Calu3 (cell line): ENCODE measurements at regions of chr5 and their contacts with region 1.

Region 1: DNA sequence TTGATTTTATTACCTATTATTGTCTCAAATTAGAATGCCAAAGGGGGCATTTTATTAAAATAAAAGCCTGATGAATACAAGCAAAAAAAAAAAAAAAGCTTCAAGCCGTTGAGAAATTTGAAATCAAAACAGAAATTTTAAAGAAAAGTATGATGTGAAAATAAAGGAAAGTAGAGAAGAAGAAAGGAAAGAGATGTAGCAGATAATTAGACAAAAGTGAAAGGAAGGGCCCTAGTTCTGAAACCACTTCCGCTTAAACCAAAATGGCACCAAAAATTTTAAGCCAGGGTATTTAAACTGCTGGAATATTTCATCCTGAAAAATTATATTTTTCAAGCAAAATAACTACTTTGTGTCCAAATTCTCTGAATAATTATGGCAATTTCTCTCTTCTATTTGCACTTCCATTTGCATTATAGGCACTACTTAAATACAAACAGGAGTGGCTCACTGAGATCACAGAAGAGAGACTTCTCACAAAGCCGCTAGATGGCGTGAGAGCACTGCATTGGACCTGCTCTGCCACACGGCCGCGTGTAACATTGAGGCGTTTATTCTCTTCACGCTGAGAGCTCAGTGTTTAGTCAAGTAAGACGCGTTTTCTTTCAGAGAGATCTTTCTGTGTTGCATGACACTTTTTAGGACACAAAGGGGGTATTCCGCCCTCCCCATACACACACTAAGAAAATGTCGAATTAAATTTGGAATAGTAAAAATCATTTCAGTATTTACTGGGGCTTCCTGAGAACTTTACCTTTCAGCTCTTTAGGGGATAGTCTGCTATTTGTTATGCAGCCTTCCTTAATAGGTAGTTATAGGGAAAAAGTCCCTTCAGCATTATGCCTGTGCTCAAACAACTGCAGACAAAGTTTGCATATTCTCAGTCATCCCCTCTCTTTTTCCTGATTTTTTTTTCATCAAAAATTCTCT is 368.4 kb upstream of the CCNH start:
- DNase-seq: peak; percentile 83
- H3K4me3 Mint-ChIP-seq: no peak overlapping the region
- H3K27ac Mint-ChIP-seq: no peak overlapping the region
- H3K4me1 Mint-ChIP-seq: peaks cover 26% of the 10 kb centered on the region
- H3K27me3 Mint-ChIP-seq: no peaks in the 10 kb centered on the region
- CTCF ChIP-seq: peak; percentile 90

Region 2: DNA sequence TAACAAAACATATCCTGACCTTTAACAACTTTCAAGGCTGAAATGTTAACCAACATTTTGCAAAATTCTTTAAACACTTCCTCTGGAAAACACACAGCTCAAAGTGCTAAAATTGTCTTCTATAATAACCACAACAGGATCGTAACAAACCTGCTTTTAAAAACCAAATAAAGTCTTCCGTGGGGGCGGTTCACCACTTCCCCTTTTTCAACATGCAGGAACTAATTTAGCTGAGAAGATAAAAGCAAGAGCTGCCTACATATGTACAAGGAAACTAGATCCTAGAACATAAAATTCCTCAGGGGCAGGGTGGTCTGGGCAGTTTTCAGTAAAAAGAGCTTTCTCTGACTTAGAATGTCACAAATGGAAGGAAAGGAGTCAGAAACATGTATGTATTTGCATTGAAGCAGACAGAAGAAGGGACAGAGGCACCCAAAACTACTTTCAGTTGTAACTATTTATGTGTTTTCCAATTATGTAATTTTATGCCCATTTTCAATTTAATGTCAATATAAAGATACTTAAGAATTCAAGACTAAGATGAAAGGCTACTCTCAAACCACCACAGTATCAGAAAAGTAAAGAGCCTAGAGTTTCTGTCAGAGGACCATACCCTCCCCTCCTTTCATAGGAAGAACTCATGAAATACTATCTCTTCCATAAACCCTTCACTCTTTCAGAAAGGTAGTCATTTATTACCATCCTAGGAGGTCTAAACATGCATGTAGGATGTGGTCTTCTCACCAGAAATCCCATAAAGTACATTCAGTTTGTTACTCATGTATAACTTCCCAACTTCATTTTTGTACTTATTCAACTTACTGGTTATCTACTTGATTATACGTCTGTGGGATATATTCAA is 699.4 kb before region 1 on chr5:
- CTCF ChIA-PET with region 1: no interaction called
- intact Hi-C with region 1: no loop called
- DNase-seq: no peak
- H3K4me3 Mint-ChIP-seq: no peak overlapping the region
- H3K27ac Mint-ChIP-seq: peak overlapping the region; percentile 53
- H3K4me1 Mint-ChIP-seq: peaks cover 32% of the 10 kb centered on the region
- H3K27me3 Mint-ChIP-seq: no peaks in the 10 kb centered on the region
- CTCF ChIP-seq: no peak

Region 3: DNA sequence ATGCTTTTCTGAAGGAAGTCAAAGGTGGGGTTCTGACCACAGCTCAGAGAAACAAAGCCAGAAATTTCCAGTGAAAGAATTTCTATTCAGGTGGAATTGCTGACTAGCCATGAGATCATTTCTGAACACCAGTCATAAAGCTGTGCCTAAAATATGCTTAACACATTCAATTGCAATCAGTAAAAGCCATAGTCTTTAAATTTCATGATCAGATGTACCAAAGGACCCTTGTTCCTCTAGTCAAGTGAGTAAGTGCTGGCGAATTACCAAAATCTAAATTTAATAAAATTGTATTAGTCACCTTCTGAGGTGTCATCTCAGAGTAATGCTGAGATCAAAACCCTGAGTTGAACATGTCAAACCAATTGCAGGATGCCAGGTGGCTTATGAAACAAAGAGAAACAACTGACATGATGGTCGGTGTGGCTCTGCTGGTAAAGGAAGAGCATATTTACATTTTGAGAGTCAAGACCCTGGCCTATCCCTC is 34.2 kb before region 1 on chr5:
- CTCF ChIA-PET with region 1: no interaction called
- intact Hi-C with region 1: no loop called
- DNase-seq: no peak
- H3K4me3 Mint-ChIP-seq: no peak overlapping the region
- H3K27ac Mint-ChIP-seq: no peak overlapping the region
- H3K4me1 Mint-ChIP-seq: peaks cover 4% of the 10 kb centered on the region
- H3K27me3 Mint-ChIP-seq: no peaks in the 10 kb centered on the region
- CTCF ChIP-seq: no peak

Region 4: DNA sequence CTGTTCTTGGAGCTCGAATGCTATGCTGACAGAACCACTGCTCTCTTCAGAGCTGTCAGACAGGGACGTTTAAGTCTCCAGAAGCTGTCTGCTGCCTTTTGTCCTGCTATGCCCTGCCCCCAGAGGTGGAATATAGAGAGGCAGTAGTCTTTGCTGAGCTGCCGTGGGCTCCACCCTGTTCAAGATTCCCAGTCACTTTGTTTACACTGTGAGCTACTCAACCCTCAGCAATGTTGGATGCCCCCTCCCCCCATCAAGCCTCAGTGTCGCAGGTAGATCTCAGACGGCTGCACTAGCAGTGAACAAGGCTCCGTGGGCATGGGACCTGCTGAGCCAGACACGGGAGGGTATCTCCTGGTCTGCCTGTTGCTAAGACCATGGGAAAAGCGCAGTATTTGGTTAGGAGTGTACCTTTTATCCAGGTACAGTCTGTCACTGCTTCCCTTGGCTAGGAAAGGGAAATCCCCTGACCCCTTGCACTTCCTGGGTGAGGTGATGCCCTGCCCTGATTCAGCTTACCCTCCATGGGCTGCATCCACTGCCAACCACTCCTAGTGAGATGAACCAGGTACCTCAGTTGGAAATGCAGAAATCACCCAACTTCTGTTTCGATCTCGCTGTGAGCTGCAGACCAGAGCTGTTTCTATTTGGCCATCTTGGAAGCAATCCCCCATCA is 143.5 kb after region 1 on chr5:
- CTCF ChIA-PET with region 1: interaction called, 7 read pairs
- intact Hi-C with region 1: loop called (anchors 5 kb)
- DNase-seq: peak; percentile 80
- H3K4me3 Mint-ChIP-seq: peak overlapping the region; percentile 9
- H3K27ac Mint-ChIP-seq: no peak overlapping the region
- H3K4me1 Mint-ChIP-seq: peaks cover 8% of the 10 kb centered on the region
- H3K27me3 Mint-ChIP-seq: no peaks in the 10 kb centered on the region
- CTCF ChIP-seq: peak; percentile 29

Region 5: DNA sequence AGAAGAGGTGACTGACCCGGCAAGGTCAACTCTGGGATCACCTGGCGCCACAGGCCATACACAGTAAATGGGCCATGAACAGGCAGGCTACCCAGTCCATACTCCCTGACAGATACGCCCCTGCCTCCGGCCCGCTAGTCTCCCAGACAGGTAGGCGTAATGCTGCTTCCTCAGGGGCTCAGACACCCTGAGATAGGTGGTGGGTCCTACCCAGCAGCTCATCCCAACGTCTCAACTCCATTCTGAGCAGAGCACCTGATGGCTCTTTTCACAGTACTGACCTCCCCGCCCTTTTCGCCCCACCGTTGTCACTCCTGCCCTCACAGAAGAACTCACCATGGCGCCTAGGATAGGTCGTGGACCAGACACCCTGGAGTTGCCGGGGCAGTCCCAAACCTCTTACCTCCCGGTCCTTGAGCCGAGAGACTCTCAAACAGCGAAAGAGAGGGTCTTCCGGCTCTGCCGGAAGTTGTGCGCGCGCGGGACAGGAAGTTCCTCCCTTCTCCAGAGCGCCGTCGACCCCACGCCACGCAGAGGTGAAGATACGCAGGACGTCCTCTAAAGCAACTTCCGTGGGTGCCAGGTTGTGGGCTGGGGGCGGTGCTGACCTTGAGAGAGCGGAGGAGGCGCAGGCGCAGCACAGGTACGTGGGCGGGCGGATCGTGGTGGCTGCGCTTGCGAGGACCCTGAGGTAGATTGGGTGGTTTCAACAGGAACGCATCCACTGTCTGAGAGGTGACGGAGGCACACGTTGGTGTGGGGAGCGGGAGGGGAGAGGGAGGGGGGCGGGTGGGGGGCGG is 487.5 kb after region 1 on chr5 and contains the start of gene TMEM161B:
- CTCF ChIA-PET with region 1: no interaction called
- intact Hi-C with region 1: loop called (anchors 10 kb)
- DNase-seq: peak; percentile 95
- H3K4me3 Mint-ChIP-seq: peak within 1 kb of the TSS; percentile 98
- H3K27ac Mint-ChIP-seq: peak within 1 kb of the TSS; percentile 94
- H3K4me1 Mint-ChIP-seq: peaks cover 32% of the 10 kb centered on the region
- H3K27me3 Mint-ChIP-seq: no peaks in the 10 kb centered on the region
- CTCF ChIP-seq: no peak
- total RNA-seq, gene TMEM161B: 34.1 and 35.7 TPM in 2 replicates

Region 6: GRCh38 chr5:88690409-88691229 is 909.5 kb after region 1 on chr5:
- CTCF ChIA-PET with region 1: interaction called, 44 read pairs
- intact Hi-C with region 1: loop called (anchors 1 kb)
- DNase-seq: peak; percentile 79
- H3K4me3 Mint-ChIP-seq: peak overlapping the region; percentile 77
- H3K27ac Mint-ChIP-seq: no peak overlapping the region
- H3K4me1 Mint-ChIP-seq: peaks cover 34% of the 10 kb centered on the region
- H3K27me3 Mint-ChIP-seq: peaks cover 35% of the 10 kb centered on the region
- CTCF ChIP-seq: peak; percentile 97